PC-9 (cell line): ENCODE measurements at regions of chr11 and their contacts with region 1.

Region 1: GRCh38 chr11:12235947-12236743 is 125.8 kb downstream of the MICAL2 start:
- DNase-seq: no peak
- H3K4me3 ChIP-seq: no peak overlapping the region
- H3K27ac ChIP-seq: no peak overlapping the region
- H3K4me1 ChIP-seq: peaks cover 13% of the 10 kb centered on the region
- H3K27me3 ChIP-seq: no peaks in the 10 kb centered on the region
- CTCF ChIP-seq: peak; percentile 72

Region 2: GRCh38 chr11:12066799-12067508 is 169.2 kb before region 1 on chr11:
- CTCF ChIA-PET with region 1: interaction called, 10 read pairs
- POLR2A ChIA-PET with region 1: no interaction called
- intact Hi-C with region 1: no loop called
- DNase-seq: peak; percentile 41 to 85
- H3K4me3 ChIP-seq: peak overlapping the region; percentile 26; the same call in 1 of the 2 replicates
- H3K27ac ChIP-seq: peak overlapping the region; percentile 94
- H3K4me1 ChIP-seq: peaks cover 39% of the 10 kb centered on the region
- H3K27me3 ChIP-seq: no peaks in the 10 kb centered on the region
- CTCF ChIP-seq: no peak

Region 3: DNA sequence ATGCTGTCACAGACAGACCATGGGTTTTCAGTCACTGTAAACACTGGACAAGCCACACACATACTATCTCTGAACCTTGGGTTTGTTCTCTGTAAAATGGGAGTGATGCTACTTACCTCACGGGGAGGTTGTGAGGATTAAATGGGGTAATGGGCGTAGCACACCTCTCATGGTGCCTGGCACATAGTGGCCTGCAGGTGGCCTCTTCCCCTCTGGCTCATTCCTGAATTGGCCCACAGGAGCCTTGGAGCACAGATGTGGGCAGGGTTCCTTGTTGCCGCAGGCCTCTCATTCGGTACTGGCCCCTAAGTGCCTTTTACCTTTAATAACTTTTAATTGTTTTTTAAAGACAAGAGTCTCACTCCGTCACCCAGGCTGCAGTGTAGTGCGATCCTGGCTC is 114.1 kb before region 1 on chr11:
- CTCF ChIA-PET with region 1: interaction called, 4 read pairs
- POLR2A ChIA-PET with region 1: no interaction called
- intact Hi-C with region 1: loop called (anchors 5 kb)
- DNase-seq: no peak
- H3K4me3 ChIP-seq: no peak overlapping the region
- H3K27ac ChIP-seq: no peak overlapping the region
- H3K4me1 ChIP-seq: peaks cover 87% of the 10 kb centered on the region
- H3K27me3 ChIP-seq: no peaks in the 10 kb centered on the region
- CTCF ChIP-seq: peak; percentile 40; the same call in 1 of the 2 replicates

Region 4: DNA sequence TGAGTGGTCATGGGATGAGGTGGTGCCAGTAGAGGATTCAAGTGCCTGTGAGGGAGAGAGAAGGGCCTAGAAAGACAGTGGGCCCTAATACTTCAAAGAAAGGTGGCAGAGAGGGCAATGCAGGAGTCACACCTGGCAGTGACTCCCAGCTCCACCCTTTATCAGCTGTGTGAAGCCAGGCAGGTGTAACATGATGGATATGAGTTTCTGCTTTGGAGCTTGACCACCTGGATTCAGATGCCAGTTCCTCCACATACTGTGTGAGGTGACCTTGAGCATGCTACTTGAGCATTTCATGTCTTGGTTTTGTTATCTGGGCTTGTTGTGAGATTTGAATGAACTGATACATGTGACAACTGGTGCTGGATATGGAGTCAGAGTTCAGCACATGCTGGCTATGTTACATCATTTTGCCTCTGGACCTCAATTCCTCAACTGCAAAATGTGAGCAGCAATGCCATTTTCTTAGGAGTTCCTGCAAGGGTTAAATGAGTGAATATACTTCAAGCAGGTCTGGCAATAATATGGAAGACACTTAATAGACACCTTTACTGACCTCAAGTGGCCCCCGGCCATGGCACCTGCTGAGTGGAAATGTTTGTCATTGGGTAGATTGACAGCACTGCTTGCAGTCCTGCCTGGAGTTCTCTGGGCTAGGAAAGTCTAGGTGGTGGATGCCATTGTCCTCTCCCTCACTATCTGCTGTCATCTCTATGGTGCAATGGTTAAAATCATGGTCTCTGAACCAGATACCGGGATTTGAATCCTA is 42.4 kb before region 1 on chr11:
- CTCF ChIA-PET with region 1: no interaction called
- POLR2A ChIA-PET with region 1: interaction called, 13 read pairs
- intact Hi-C with region 1: no loop called
- DNase-seq: no peak
- H3K4me3 ChIP-seq: no peak overlapping the region
- H3K27ac ChIP-seq: no peak overlapping the region
- H3K4me1 ChIP-seq: no peaks in the 10 kb centered on the region; the same call in 1 of the 2 replicates
- H3K27me3 ChIP-seq: no peaks in the 10 kb centered on the region
- CTCF ChIP-seq: no peak

Region 5: DNA sequence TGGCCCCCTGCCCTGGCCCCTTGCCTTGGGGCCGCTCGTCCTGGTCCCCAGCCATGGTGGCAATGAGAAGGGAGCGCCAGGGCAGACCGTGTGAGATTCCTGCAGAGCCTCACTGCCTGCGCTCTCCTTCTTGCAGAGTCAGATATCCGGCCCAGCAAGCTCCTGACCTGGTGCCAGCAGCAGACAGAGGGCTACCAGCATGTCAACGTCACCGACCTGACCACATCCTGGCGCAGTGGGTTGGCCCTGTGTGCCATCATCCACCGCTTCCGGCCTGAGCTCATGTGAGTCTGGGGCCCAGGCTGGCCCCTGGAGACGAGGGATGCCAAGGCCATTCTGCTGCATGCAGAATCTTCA is 11.6 kb before region 1 on chr11:
- CTCF ChIA-PET with region 1: interaction called, 3 read pairs
- POLR2A ChIA-PET with region 1: interaction called, 14 read pairs
- intact Hi-C with region 1: no loop called
- DNase-seq: peak; percentile 78 to 79
- H3K4me3 ChIP-seq: peak overlapping the region; percentile 41; the same call in 1 of the 2 replicates
- H3K27ac ChIP-seq: peak overlapping the region; percentile 94
- H3K4me1 ChIP-seq: peaks cover 70% of the 10 kb centered on the region
- H3K27me3 ChIP-seq: no peaks in the 10 kb centered on the region
- CTCF ChIP-seq: no peak